Activated B cell treated with CpG ODN at 0.5 μM for 24 hours (primary cell): ENCODE measurements at regions of chr16 and their contacts with region 1.

Region 1: GRCh38 chr16:6528217-6528616 is 804.4 kb upstream of the RBFOX1 start:
- DNase-seq: no peak
- ATAC-seq: no peak
- H3K4me3 Mint-ChIP-seq: no peak overlapping the region
- H3K27ac Mint-ChIP-seq: no peak overlapping the region
- H3K4me1 Mint-ChIP-seq: no peaks in the 10 kb centered on the region
- H3K27me3 Mint-ChIP-seq: no peaks in the 10 kb centered on the region
- CTCF ChIP-seq: no peak

Region 2: GRCh38 chr16:6481894-6482293 is 46.3 kb before region 1 on chr16:
- CTCF ChIA-PET with region 1: no interaction called
- POLR2A ChIA-PET with region 1: no interaction called
- intact Hi-C with region 1: no loop called
- DNase-seq: no peak
- ATAC-seq: no peak
- H3K4me3 Mint-ChIP-seq: no peak overlapping the region
- H3K27ac Mint-ChIP-seq: no peak overlapping the region
- H3K4me1 Mint-ChIP-seq: no peaks in the 10 kb centered on the region
- H3K27me3 Mint-ChIP-seq: peaks cover 6% of the 10 kb centered on the region
- CTCF ChIP-seq: no peak

Region 3: DNA sequence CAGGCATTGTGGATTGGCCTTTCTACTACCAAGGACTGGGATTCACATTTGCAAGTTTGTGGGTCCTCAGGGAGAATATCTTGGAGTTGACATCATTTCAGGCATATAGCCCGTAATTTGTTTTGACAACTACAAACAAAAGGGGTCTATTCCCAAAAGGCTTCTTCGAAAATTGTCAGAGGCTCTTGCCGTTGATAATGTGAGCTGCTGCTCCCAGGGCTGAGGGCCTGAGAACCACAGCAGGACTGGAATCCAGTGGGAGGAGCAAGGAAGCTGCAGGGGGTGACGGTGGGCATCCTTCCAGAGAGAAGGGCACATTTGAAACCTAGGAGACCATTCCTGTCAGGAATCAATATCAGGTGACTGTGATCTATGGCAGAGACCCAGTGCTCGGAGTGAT is 42.8 kb after region 1 on chr16:
- CTCF ChIA-PET with region 1: no interaction called
- POLR2A ChIA-PET with region 1: no interaction called
- intact Hi-C with region 1: loop called (anchors 1 kb)
- DNase-seq: no peak
- ATAC-seq: no peak
- H3K4me3 Mint-ChIP-seq: no peak overlapping the region
- H3K27ac Mint-ChIP-seq: no peak overlapping the region
- H3K4me1 Mint-ChIP-seq: no peaks in the 10 kb centered on the region
- H3K27me3 Mint-ChIP-seq: no peaks in the 10 kb centered on the region
- CTCF ChIP-seq: no peak

Region 4: DNA sequence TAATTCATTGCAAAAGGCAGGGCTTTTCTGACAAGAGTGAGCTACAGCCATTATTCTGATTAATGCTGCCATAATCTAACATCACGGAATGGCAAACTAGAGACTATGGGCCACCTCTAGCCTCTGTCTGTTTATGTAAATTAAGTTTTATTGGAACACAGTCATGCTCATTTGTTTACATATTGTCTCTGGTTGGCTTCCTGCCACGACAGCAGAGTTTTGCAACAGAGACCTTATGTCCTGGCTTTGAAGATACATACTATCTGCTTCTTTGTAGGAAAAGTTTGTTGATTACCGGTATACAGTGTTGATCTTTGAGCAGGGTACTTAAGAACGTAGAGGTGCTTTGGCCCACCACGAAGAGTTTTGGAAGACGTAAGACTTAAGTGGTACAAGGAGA is 88.5 kb after region 1 on chr16:
- CTCF ChIA-PET with region 1: no interaction called
- POLR2A ChIA-PET with region 1: no interaction called
- intact Hi-C with region 1: no loop called
- DNase-seq: no peak
- ATAC-seq: no peak
- H3K4me3 Mint-ChIP-seq: no peak overlapping the region
- H3K27ac Mint-ChIP-seq: no peak overlapping the region
- H3K4me1 Mint-ChIP-seq: no peaks in the 10 kb centered on the region
- H3K27me3 Mint-ChIP-seq: no peaks in the 10 kb centered on the region
- CTCF ChIP-seq: no peak